Testis (tissue), 5 donors: ENCODE measurements at regions of chr18 and their contacts with region 1.

Region 1: DNA sequence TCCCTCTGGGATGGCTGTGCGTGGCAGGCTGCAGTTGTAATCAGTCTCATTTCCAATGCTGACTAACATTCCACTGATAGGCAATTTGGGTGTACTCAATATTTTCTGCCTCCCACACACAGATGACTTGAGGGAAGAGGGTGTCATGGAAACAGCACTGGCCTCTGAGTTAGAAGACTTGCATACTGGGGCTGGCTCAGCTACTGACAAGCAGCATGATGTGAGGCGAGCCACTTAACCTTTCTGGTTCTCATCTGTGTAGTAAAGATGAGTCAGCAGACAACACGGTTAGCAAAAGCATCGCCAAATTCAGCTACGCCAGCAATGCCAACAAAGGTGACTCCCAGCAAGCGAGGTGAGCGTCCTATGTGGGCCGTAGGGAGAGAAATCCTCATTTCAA is 73.5 kb downstream of the COLEC12 start:
- DNase-seq: no peak
- H3K4me3 ChIP-seq: no peak overlapping the region
- H3K27ac ChIP-seq: no peak overlapping the region
- H3K4me1 ChIP-seq: no peaks in the 10 kb centered on the region
- H3K27me3 ChIP-seq: no peaks in the 10 kb centered on the region
- CTCF ChIP-seq: no peak
- POLR2A ChIP-seq: no peak

Region 2: DNA sequence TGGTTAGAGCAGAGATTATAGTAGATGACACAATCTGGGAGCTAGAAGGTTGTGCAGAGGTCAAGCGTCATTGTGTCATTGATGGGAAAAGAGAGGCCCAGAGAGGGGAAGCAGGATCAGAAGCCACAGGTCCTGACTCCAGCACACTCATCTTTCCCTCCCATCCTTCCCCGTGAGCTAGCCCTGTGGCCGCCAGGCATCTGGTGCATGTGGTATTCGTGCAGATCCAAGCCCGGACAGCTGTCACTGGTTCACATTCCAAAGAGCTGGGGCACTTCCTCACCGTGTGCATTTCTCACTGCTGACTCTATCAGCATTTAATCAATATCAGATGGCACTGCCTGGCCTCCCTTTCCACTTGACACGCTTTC is 65.1 kb before region 1 on chr18:
- intact Hi-C with region 1: loop called (anchors 10 kb)
- DNase-seq: peak; percentile 27
- H3K4me3 ChIP-seq: no peak overlapping the region
- H3K27ac ChIP-seq: no peak overlapping the region
- H3K4me1 ChIP-seq: peaks cover 5% of the 10 kb centered on the region
- H3K27me3 ChIP-seq: no peaks in the 10 kb centered on the region
- CTCF ChIP-seq: no peak
- POLR2A ChIP-seq: no peak

Region 3: GRCh38 chr18:778194-778927 is 351.4 kb after region 1 on chr18:
- intact Hi-C with region 1: no loop called
- DNase-seq: no peak
- H3K4me3 ChIP-seq: no peak overlapping the region
- H3K27ac ChIP-seq: no peak overlapping the region
- H3K4me1 ChIP-seq: peaks cover 8% of the 10 kb centered on the region
- H3K27me3 ChIP-seq: no peaks in the 10 kb centered on the region
- CTCF ChIP-seq: no peak
- POLR2A ChIP-seq: no peak